Posterior vena cava (tissue), 2 donors: ENCODE measurements at regions of chr6 and their contacts with region 1.

Region 1: DNA sequence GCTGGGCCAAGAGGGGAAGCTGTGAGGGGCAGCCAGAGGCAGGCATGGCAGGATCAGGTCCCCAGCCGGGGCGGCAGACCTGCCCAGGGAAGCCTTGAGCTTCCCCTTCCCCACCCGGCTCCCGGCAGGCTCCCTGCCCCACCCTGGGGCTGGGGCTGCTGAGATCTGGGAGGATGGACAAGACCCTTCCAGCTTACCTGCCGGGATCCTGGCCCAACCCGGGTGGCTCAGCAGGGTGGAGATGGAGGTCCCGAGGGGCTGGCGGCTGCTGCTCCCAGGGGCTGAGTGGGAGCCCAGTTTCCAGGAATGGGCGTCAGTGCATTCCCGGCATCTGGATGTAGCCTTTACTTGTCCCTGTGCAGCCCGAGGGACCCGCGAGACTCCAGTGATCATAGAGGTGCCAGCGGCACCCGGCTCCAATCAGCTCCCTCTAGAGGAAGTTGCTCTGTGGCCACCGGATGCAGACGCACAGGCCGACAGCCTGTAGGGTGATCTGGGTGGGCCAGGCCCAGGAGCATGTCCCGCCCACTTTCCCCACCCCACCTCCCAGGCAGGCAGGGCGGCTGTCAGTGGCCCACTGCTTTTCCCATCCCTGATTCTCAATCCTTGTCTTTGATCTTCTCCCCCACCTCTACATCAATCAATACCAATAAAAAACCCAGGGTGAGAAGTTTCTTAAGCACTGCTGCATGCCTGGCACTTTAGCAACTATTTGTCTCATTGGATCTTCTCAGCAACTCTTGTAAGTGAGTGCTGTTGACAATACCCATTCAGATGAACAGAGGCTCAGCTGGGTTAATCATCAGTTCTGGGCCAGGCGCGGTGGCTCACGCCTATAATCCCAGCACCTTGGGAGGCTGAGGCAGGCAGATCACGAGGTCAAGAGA is at the start of gene BAK1:
- DNase-seq: peak; percentile 96
- total RNA-seq, gene BAK1: 12.4 to 17.7 TPM

Region 2: GRCh38 chr6:32947552-32948465 is 632.3 kb before region 1 on chr6:
- intact Hi-C with region 1: no loop called
- DNase-seq: no peak

Region 3: GRCh38 chr6:33672808-33673207 is 92.7 kb after region 1 on chr6:
- intact Hi-C with region 1: loop called (anchors 5 to 10 kb)
- DNase-seq: peak; percentile 97

Region 4: GRCh38 chr6:33691456-33692077 is 111.5 kb after region 1 on chr6:
- intact Hi-C with region 1: loop called in 1 of 2 experiments (anchors 1 kb)
- DNase-seq: no peak

Region 5: GRCh38 chr6:34154668-34155447 is 574.8 kb after region 1 on chr6:
- intact Hi-C with region 1: loop called in 1 of 2 experiments (anchors 10 kb)
- DNase-seq: peak; percentile 88